Activated B cell treated with CpG ODN at 0.5 μM for 24 hours (primary cell): ENCODE measurements at regions of chr11 and their contacts with region 1.

Region 1: GRCh38 chr11:6603287-6604080 is at the starts of genes ILK and RRP8:
- DNase-seq: peak; percentile 78
- ATAC-seq: peak; percentile 88
- H3K4me3 Mint-ChIP-seq: no peak within 1 kb of the TSS
- H3K27ac Mint-ChIP-seq: no peak within 1 kb of the TSS
- H3K4me1 Mint-ChIP-seq: peaks cover 10% of the 10 kb centered on the region
- H3K27me3 Mint-ChIP-seq: no peaks in the 10 kb centered on the region
- CTCF ChIP-seq: no peak
- total RNA-seq, gene ILK: 113 and 128 TPM in 2 replicates
- total RNA-seq, gene RRP8: 29.1 and 30.5 TPM in 2 replicates

Region 2: GRCh38 chr11:6389921-6390724 is 213.4 kb before region 1 on chr11 and contains the start of gene SMPD1:
- CTCF ChIA-PET with region 1: no interaction called
- POLR2A ChIA-PET with region 1: interaction called, 16 read pairs
- intact Hi-C with region 1: loop called (anchors 5 kb)
- DNase-seq: peak; percentile 86
- ATAC-seq: peak; percentile 93
- H3K4me3 Mint-ChIP-seq: peak within 1 kb of the TSS; percentile 95
- H3K27ac Mint-ChIP-seq: peak within 1 kb of the TSS; percentile 99
- H3K4me1 Mint-ChIP-seq: peaks cover 36% of the 10 kb centered on the region
- H3K27me3 Mint-ChIP-seq: no peaks in the 10 kb centered on the region
- CTCF ChIP-seq: no peak
- total RNA-seq, gene SMPD1: 14.1 and 16.9 TPM in 2 replicates

Region 3: DNA sequence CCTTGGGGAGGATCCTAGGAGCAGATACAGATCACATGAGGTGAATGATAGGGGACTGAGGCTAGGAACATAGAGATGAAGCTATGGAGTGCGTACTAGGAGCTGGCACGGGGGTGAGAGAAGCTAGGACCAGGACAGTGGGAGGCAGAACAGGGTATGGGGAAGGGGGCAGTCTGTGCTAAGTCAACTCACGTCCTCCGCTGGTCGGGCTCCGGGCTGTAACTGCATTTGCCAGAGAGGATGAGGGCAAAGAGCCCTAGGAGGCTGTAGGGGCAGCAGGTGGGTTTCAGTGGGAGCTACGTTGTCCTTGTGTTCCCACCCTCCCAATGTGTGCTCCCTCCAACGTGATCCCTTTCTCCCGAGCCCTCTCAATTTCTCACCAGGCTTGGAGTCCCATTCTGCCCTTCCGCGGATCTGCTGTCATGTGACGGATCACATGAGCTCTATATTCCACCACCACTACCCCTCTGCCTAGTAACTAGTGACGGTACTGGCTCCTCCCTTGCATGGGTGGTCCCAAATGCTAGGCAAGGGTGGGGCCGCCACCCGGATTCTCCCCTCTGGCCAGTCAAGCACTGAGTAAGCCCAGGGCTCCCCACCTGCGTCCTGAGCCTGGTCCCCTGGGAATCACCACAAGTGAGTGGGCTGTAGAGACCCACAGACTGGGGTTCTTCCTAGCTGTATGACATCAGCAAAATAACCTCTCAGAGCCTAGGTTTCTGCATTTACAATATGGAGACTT is 15.7 kb after region 1 on chr11 and contains the start of gene TPP1:
- CTCF ChIA-PET with region 1: interaction called, 19 read pairs
- POLR2A ChIA-PET with region 1: interaction called, 69 read pairs
- intact Hi-C with region 1: loop called (anchors 1 kb)
- DNase-seq: peak; percentile 87
- ATAC-seq: peak; percentile 89
- H3K4me3 Mint-ChIP-seq: no peak within 1 kb of the TSS
- H3K27ac Mint-ChIP-seq: no peak within 1 kb of the TSS
- H3K4me1 Mint-ChIP-seq: peaks cover 7% of the 10 kb centered on the region
- H3K27me3 Mint-ChIP-seq: no peaks in the 10 kb centered on the region
- CTCF ChIP-seq: no peak
- total RNA-seq, gene TPP1: 98.2 and 123 TPM in 2 replicates

Region 4: DNA sequence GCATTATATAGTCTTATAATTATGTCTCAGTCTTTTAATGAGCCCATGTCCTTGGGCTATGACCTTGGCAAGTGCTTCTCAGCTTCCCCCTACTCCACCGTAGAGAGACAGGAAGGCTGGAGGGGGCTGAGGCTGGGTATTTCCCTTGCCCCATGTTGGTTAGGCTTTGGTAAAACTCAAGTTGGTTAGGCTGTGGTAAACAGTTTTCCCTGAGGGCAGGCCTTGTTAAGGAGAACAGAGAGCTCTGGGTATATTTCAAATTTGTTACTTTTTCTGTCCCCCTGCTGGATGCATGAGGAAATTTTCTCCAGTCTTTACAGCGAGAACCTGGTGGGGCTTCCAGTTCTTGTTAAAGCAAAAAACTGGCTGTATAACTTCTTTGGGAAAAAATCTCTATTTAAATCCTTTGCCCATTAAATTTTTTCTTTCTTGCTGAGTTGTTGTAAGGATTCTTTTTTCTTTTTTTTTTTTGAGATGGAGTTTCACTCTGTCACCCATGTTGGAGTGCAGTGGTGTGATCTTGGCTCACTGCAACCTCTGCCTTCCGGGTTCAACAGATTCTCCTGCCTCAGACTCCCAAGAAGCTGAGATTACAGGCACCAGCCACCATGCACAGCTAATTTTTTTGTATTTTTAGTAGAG is 64.4 kb after region 1 on chr11:
- CTCF ChIA-PET with region 1: interaction called, 21 read pairs
- POLR2A ChIA-PET with region 1: interaction called, 9 read pairs
- intact Hi-C with region 1: loop called (anchors 1 kb)
- DNase-seq: no peak
- ATAC-seq: peak; percentile 83
- H3K4me3 Mint-ChIP-seq: no peak overlapping the region
- H3K27ac Mint-ChIP-seq: no peak overlapping the region
- H3K4me1 Mint-ChIP-seq: peaks cover 4% of the 10 kb centered on the region
- H3K27me3 Mint-ChIP-seq: peaks cover 2% of the 10 kb centered on the region
- CTCF ChIP-seq: no peak

Region 5: GRCh38 chr11:6757373-6757967 is 154.0 kb after region 1 on chr11:
- CTCF ChIA-PET with region 1: interaction called, 3 read pairs
- POLR2A ChIA-PET with region 1: no interaction called
- intact Hi-C with region 1: loop called (anchors 5 kb)
- DNase-seq: no peak
- ATAC-seq: peak; percentile 78
- H3K4me3 Mint-ChIP-seq: no peak overlapping the region
- H3K27ac Mint-ChIP-seq: no peak overlapping the region
- H3K4me1 Mint-ChIP-seq: no peaks in the 10 kb centered on the region
- H3K27me3 Mint-ChIP-seq: peaks cover 3% of the 10 kb centered on the region
- CTCF ChIP-seq: peak; percentile 41